Transverse colon (tissue), 4 donors: ENCODE measurements at regions of chr19 and their contacts with region 1.

Region 1: DNA sequence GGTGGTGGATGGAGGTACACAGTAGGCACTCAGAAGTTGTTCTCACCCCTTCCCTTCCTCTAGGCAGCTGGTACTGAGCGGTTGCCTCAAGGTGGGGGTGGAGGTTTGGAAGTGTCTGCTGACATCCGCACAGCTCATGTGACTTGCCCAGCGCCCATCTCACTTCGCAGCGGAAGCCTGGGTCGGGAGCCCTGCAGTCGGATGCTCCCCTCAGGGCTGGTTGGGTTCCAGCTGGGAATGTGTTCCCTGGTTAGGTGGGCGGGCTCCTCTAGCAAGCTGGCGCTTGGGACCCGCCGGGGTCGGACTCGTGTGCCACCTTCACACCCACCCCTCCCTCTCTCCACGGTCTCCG is 10.2 kb downstream of the PPP1R37 start:
- DNase-seq: no peak
- H3K4me3 ChIP-seq: no peak overlapping the region
- H3K27ac ChIP-seq: peak overlapping the region in 3 of 4 donors; percentile 0 to 31 (median 7)
- H3K4me1 ChIP-seq: peaks cover 5 to 51% (median 32%) of the 10 kb centered on the region in 4 donors
- H3K27me3 ChIP-seq: no peaks in the 10 kb centered on the region
- CTCF ChIP-seq: no peak
- EP300 ChIP-seq: no peak
- POLR2A ChIP-seq: no peak

Region 2: GRCh38 chr19:45027371-45027770 is 75.8 kb before region 1 on chr19:
- in situ Hi-C with region 1: no loop called
- intact Hi-C with region 1: no loop called
- DNase-seq: no peak
- H3K4me3 ChIP-seq: no peak overlapping the region
- H3K27ac ChIP-seq: no peak overlapping the region
- H3K4me1 ChIP-seq: no peaks in the 10 kb centered on the region
- H3K27me3 ChIP-seq: no peaks in the 10 kb centered on the region
- CTCF ChIP-seq: no peak
- EP300 ChIP-seq: no peak
- POLR2A ChIP-seq: no peak

Region 3: DNA sequence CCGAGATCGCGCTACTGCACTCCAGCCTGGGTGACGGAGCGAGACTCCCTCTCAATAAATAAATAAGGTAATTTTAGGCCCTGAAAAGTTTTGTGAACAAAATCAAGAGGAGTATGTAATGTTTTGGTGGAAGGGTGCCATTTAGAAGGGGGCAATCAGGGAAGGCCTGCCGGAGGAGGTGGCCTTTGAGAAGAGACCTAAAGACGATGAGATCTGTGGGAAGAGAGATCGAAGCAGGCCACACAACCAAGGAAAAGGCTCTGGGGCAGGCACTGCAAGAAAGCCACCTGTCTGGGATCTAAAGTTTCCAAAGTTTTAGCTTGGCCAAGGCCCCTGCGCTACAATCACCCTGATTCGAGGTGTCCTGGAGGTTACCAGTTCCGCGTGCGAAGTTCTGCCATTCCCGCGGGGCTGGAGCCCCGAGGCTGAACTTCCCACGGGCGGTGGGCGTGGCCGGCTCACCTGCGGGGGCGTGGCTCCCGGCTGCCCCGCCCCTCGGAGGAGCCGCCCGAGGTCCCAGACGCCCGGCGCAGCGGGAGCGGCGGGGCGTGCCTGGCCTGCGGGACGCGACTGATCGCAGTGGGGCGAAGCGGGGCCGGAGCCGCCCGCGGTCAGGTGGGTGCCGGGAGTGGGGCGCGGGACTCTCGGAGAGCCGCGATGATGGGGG is 237.2 kb after region 1 on chr19 and contains the start of gene KLC3:
- in situ Hi-C with region 1: no loop called
- intact Hi-C with region 1: loop called (anchors 10 kb)
- DNase-seq: peak; percentile 61
- H3K4me3 ChIP-seq: peak within 1 kb of the TSS in 2 of 4 donors; percentile 22 to 27
- H3K27ac ChIP-seq: no peak within 1 kb of the TSS
- H3K4me1 ChIP-seq: peaks cover 0 to 12% (median 8%) of the 10 kb centered on the region in 4 donors
- H3K27me3 ChIP-seq: peaks cover 62% of the 10 kb centered on the region
- CTCF ChIP-seq: no peak
- EP300 ChIP-seq: no peak
- POLR2A ChIP-seq: no peak
- total RNA-seq, gene KLC3: not detected

Region 4: DNA sequence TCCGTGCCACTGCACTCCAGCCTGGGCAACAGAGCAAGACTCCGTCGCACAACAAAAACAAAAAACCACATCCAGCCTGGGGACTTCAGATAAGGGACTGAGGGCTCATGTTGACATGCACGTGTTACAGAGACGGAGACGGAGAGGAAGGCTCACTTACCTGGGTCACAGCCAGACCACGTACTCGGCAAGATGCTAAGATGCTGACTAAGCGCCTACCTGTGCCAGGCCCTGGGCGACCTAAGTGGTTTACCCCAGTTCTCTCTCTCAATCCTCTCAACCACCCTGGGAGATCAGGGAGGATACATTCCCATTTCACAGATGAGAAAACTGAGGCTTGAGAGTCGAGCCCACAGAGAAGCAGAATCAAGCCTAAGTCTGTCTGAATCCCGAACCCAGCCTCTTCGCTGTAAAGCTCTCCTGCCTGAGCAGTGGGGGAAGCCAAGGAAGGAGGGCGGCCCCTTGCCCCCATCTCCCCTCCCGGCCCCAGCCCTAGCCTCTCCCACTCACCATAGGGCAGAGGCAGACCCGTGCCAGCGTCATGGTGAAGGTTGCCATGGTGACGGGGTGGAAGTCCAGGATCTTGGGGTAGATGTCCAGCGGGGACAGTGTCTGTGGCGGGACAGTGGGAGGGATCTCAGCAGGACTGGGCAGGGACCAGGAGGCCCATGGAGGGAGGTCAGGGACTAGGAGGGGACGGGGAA is 253.8 kb after region 1 on chr19:
- in situ Hi-C with region 1: no loop called
- intact Hi-C with region 1: no loop called
- DNase-seq: no peak
- H3K4me3 ChIP-seq: no peak overlapping the region
- H3K27ac ChIP-seq: no peak overlapping the region
- H3K4me1 ChIP-seq: no peaks in the 10 kb centered on the region
- H3K27me3 ChIP-seq: no peaks in the 10 kb centered on the region
- CTCF ChIP-seq: no peak
- EP300 ChIP-seq: no peak
- POLR2A ChIP-seq: no peak